Calu3 (cell line): ENCODE measurements at regions of chr10 and their contacts with region 1.

Region 1: DNA sequence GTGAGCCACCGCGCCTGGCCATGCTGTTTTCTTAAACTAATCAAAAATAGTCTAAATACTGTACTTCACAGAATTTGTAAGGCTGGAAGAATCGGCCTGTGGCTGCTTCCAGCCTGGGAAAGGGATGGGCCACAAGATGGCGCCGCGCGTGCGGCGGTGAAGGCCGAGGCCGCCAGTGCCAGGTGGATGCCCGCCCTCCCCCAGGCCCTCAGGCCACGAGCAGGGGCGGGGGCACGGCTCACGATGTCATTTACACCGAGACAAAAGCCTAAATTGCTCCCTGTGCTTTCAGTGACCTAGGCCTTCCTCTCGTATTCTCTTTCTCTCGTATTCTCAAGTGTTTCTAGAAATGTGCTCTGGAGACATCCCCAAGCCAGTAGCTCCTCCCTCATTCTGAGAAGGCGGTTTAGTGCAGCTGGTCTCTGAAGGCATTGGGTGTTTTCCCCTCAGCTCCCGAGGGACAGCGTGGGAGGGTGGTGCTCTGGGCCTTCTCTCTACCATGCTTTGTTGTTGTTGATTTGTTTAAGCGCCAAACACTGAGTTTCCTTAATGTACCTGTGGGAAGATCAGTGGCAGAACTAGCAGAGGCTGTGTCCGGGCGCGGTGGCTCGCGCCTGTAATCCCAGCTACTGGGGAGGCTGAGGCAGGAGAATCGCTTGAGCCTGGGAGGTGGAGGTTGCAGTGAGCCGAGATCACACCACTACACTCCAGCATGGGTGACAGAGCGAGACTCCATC is 68.4 kb downstream of the CDC123 start:
- DNase-seq: peak; percentile 84
- H3K4me3 Mint-ChIP-seq: peak overlapping the region; percentile 52
- H3K27ac Mint-ChIP-seq: peak overlapping the region; percentile 3
- H3K4me1 Mint-ChIP-seq: peaks cover 14% of the 10 kb centered on the region
- H3K27me3 Mint-ChIP-seq: no peaks in the 10 kb centered on the region
- CTCF ChIP-seq: peak; percentile 63

Region 2: GRCh38 chr10:11286261-11286852 is 978.0 kb before region 1 on chr10:
- CTCF ChIA-PET with region 1: no interaction called
- intact Hi-C with region 1: no loop called
- DNase-seq: no peak
- H3K4me3 Mint-ChIP-seq: no peak overlapping the region
- H3K27ac Mint-ChIP-seq: no peak overlapping the region
- H3K4me1 Mint-ChIP-seq: no peaks in the 10 kb centered on the region
- H3K27me3 Mint-ChIP-seq: peaks cover 4% of the 10 kb centered on the region
- CTCF ChIP-seq: no peak

Region 3: GRCh38 chr10:12181065-12181775 is 83.2 kb before region 1 on chr10:
- CTCF ChIA-PET with region 1: no interaction called
- intact Hi-C with region 1: no loop called
- DNase-seq: no peak
- H3K4me3 Mint-ChIP-seq: no peak overlapping the region
- H3K27ac Mint-ChIP-seq: no peak overlapping the region
- H3K4me1 Mint-ChIP-seq: no peaks in the 10 kb centered on the region
- H3K27me3 Mint-ChIP-seq: no peaks in the 10 kb centered on the region
- CTCF ChIP-seq: no peak

Region 4: DNA sequence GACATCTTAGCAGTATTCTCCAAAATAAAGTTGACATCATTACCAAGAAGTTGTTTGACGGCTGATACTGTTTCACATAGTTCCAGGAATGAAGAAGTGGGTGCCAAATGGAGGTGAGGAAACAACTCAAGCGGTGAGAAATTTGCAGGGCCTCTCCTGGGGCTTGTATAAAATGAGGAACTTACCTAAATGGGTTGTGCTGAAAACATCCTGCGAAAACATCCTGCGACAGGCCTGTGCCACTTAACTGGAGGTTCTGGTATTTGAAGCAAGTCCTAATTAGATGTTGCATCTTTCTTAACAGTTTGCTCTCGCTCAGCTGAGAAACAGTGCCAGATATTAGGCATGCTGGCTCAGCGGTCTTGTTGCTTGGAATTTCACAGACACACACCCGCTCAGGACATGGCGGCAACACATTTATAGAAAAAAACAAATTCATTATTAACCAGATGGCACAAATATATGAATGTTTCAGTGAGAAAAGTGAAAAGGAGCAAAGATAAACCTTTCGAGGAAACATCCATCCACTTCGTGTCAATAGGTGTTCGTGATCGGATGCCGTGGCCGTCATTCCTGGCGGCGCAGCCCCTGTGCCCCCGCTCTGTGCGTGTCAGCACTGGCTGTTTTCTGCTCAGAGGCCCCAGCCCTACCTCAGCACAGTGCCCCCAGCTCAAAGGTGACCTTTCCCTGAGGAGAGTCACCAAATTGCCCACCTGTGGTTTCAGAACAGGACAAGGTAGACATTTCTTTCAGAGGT is 20.3 kb before region 1 on chr10:
- CTCF ChIA-PET with region 1: no interaction called
- intact Hi-C with region 1: no loop called
- DNase-seq: no peak
- H3K4me3 Mint-ChIP-seq: no peak overlapping the region
- H3K27ac Mint-ChIP-seq: no peak overlapping the region
- H3K4me1 Mint-ChIP-seq: no peaks in the 10 kb centered on the region
- H3K27me3 Mint-ChIP-seq: no peaks in the 10 kb centered on the region
- CTCF ChIP-seq: no peak

Region 5: GRCh38 chr10:12348870-12349628 is 84.7 kb after region 1 on chr10 and contains the start of gene CAMK1D:
- CTCF ChIA-PET with region 1: interaction called, 6 read pairs
- intact Hi-C with region 1: loop called (anchors 5 kb)
- DNase-seq: peak; percentile 56
- H3K4me3 Mint-ChIP-seq: peak within 1 kb of the TSS; percentile 80
- H3K27ac Mint-ChIP-seq: no peak within 1 kb of the TSS
- H3K4me1 Mint-ChIP-seq: peaks cover 12% of the 10 kb centered on the region
- H3K27me3 Mint-ChIP-seq: peaks cover 69% of the 10 kb centered on the region
- CTCF ChIP-seq: no peak
- total RNA-seq, gene CAMK1D: 2.6 and 2.7 TPM in 2 replicates

Region 6: GRCh38 chr10:12484941-12485805 is 220.8 kb after region 1 on chr10:
- CTCF ChIA-PET with region 1: interaction called, 3 read pairs
- intact Hi-C with region 1: loop called (anchors 5 kb)
- DNase-seq: peak; percentile 38
- H3K4me3 Mint-ChIP-seq: no peak overlapping the region
- H3K27ac Mint-ChIP-seq: no peak overlapping the region
- H3K4me1 Mint-ChIP-seq: no peaks in the 10 kb centered on the region
- H3K27me3 Mint-ChIP-seq: peaks cover 63% of the 10 kb centered on the region
- CTCF ChIP-seq: no peak

Region 7: GRCh38 chr10:12656518-12657142 is 392.3 kb after region 1 on chr10:
- CTCF ChIA-PET with region 1: interaction called, 27 read pairs
- intact Hi-C with region 1: loop called (anchors 1 kb)
- DNase-seq: peak; percentile 11
- H3K4me3 Mint-ChIP-seq: no peak overlapping the region
- H3K27ac Mint-ChIP-seq: no peak overlapping the region
- H3K4me1 Mint-ChIP-seq: no peaks in the 10 kb centered on the region
- H3K27me3 Mint-ChIP-seq: peaks cover 66% of the 10 kb centered on the region
- CTCF ChIP-seq: no peak

Region 8: GRCh38 chr10:13074561-13075451 is 810.4 kb after region 1 on chr10:
- CTCF ChIA-PET with region 1: interaction called, 3 read pairs
- intact Hi-C with region 1: loop called (anchors 1 kb)
- DNase-seq: peak; percentile 75
- H3K4me3 Mint-ChIP-seq: no peak overlapping the region
- H3K27ac Mint-ChIP-seq: no peak overlapping the region
- H3K4me1 Mint-ChIP-seq: no peaks in the 10 kb centered on the region
- H3K27me3 Mint-ChIP-seq: peaks cover 68% of the 10 kb centered on the region
- CTCF ChIP-seq: peak; percentile 62